ENCODE measurements at regions of chr14 and their contacts with region 1.

Region 1: DNA sequence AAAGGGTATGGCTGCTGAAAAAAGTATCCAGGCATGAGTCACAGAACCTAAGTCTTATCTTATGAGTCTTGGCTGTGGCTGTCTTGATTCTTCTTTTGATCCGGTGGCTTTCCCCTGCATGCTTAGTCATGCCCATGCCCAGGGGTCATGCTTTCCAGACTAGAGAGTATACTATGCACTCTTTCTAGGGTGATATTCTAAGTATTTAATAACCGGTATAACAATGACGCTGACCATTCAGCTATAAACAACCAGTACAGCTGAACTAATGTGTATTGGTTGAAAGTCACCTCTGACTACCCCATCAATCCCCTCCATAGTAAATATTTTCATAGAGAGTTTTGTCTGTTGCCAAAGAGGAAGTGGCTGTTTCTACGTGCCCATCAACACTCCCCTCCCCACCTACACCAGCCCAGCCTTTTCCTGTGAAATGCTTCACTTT is 34.7 kb upstream of the NRXN3 start:
- DNase-seq: no peak
- H3K4me3 Mint-ChIP-seq: no peak overlapping the region
- H3K27ac Mint-ChIP-seq: no peak overlapping the region
- H3K4me1 Mint-ChIP-seq: peaks cover 5% of the 10 kb centered on the region
- H3K27me3 Mint-ChIP-seq: peaks cover 7% of the 10 kb centered on the region

Region 2: DNA sequence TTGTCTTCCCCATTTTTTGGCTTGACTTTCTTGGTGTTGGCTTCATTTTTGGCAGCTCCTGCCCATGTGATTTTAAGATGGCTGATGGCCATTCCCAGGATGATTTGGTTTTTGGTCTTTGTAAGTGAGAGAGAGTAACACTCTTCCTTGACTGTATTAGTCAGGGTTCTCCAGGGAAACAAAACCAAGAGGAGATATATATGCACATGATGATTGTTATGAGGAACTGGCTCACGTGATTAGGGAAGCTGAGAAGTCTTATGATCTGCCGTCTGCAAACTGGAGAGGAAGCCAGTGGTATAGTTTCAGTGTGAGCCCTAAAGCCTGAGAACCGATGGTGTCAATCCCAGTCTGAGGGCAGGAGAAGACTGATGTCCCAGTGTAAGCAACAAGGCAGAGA is 181.3 kb after region 1 on chr14:
- CTCF ChIA-PET with region 1: interaction called, 11 read pairs
- POLR2A ChIA-PET with region 1: no interaction called
- DNase-seq: no peak
- H3K4me3 Mint-ChIP-seq: no peak overlapping the region
- H3K27ac Mint-ChIP-seq: no peak overlapping the region
- H3K4me1 Mint-ChIP-seq: no peaks in the 10 kb centered on the region
- H3K27me3 Mint-ChIP-seq: peaks cover 7% of the 10 kb centered on the region